H1 (cell line): ENCODE measurements at regions of chr5 and their contacts with region 1.

Region 1: DNA sequence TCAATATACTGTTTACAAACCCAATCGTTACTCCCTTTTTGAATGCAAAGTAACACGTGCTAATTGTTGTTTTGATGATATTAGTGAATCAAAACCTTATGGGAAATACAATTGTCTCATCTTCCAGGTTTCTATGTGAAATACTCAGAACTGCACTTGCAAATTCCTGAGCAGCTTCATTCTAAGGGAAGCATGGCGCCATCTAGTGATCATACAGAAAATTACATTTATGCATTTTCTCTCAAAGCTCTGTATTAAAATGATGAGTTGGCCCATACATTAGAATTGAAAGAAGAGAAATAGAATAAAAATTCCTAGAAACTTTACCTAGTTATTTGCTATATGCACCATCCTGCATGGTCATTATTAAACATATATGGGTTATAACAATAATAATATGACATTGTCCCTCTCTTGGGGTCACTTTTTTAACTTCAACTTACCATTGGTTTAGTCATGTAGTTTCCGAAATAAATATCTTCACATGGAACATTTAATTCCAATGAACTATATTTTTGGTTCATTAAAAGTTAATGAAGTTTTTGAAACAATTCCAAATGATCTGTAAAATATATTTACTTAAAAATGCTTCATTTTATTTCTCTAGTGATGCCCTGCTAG is 220.0 kb downstream of the PDE4D start:
- DNase-seq: no peak
- H3K4me3 ChIP-seq: no peak overlapping the region
- H3K27ac ChIP-seq: no peak overlapping the region
- H3K4me1 ChIP-seq: no peaks in the 10 kb centered on the region
- H3K27me3 ChIP-seq: no peaks in the 10 kb centered on the region
- CTCF ChIP-seq: peak in 2 of 3 experiments; percentile 60 to 65; a peak in 3 of 4 replicates
- EP300 ChIP-seq: no peak
- POLR2A ChIP-seq: no peak
- RAD21 ChIP-seq: peak; percentile 81 to 87

Region 2: DNA sequence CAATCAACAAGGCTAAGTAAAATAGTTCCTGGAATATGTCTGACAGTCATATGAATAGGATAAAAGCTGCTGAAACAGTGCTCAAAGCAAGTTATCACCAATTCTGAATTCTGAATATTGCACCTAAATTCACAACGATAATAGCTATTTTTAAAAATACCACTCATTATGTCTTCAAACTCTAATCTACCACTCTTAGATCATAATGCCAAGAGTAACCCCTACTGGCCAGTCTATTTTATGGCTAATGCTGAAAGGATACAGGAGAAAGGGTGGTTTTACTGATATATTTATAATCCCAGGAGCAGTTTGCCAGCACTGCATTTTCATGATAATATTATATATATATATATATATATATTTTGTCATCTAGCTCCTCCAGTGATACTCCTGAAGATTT is 12.8 kb before region 1 on chr5:
- CTCF ChIA-PET with region 1: interaction called, 51 read pairs
- POLR2A ChIA-PET with region 1: no interaction called
- DNase-seq: no peak
- H3K4me3 ChIP-seq: no peak overlapping the region
- H3K27ac ChIP-seq: no peak overlapping the region
- H3K4me1 ChIP-seq: peaks cover 0 to 3% (median 1%) of the 10 kb centered on the region in 4 experiments; a peak in 2 of 7 replicates
- H3K27me3 ChIP-seq: no peaks in the 10 kb centered on the region
- CTCF ChIP-seq: peak in 2 of 3 experiments; percentile 18 to 37; a peak in 2 of 4 replicates
- EP300 ChIP-seq: no peak
- POLR2A ChIP-seq: no peak
- RAD21 ChIP-seq: peak; percentile 59 to 67

Region 3: GRCh38 chr5:59684388-59685190 is 11.0 kb after region 1 on chr5:
- CTCF ChIA-PET with region 1: interaction called, 12 read pairs
- POLR2A ChIA-PET with region 1: no interaction called
- DNase-seq: no peak
- H3K4me3 ChIP-seq: no peak overlapping the region
- H3K27ac ChIP-seq: no peak overlapping the region
- H3K4me1 ChIP-seq: peaks cover 0 to 3% (median 0%) of the 10 kb centered on the region in 4 experiments; a peak in 1 of 7 replicates
- H3K27me3 ChIP-seq: no peaks in the 10 kb centered on the region
- CTCF ChIP-seq: no peak
- EP300 ChIP-seq: no peak
- POLR2A ChIP-seq: no peak
- RAD21 ChIP-seq: no peak

Region 4: GRCh38 chr5:59709846-59710245 is 36.3 kb after region 1 on chr5:
- CTCF ChIA-PET with region 1: interaction called, 10 read pairs
- POLR2A ChIA-PET with region 1: no interaction called
- DNase-seq: no peak
- H3K4me3 ChIP-seq: peak overlapping the region in 1 of 4 experiments; percentile 38; a peak in 2 of 8 replicates
- H3K27ac ChIP-seq: no peak overlapping the region
- H3K4me1 ChIP-seq: peaks cover 0 to 21% (median 7%) of the 10 kb centered on the region in 4 experiments; a peak in 3 of 7 replicates
- H3K27me3 ChIP-seq: no peaks in the 10 kb centered on the region
- CTCF ChIP-seq: no peak
- EP300 ChIP-seq: no peak
- POLR2A ChIP-seq: no peak
- RAD21 ChIP-seq: no peak

Region 5: DNA sequence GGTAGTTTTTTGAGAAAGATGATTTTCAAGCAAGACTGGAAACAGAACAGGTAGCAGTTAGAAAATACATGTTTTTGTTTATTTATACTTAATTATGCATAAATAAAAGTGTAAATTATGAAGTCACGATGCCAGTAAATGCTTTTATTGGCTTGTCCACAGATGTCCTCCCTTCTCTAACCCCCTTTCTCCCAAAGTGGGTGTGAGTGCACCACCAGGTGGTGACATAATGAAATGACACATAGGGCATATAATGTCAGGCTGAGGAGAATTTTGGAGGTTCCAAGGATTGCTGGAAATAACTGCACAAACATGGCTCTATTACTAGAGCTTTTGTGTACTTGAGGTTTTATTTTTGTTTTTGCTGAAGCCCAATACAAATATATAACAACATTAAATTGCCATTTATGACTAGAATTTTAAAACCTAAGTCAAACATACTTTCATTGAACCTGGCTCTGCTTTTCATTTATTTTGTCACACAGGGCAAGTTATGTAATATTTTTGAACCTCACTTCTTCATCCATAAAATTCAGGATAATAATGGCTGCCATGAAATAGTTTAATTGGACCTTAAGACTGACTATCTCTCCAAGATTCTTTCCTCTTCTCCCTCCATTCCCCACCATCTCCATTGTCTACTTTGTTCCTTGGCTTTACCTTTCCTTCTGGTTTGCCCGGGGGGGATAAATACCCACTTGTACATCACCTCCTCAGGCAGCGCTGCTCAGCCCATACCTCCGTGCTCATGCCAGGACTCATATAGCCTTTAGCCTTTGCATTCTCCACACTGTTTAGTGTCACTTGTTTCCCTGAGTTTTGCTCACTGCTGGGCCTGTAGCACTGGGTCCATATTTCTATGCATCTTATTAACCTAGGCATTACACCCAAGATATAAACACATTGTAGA is 51.2 kb after region 1 on chr5:
- CTCF ChIA-PET with region 1: interaction called, 11 read pairs
- POLR2A ChIA-PET with region 1: no interaction called
- DNase-seq: peak in 1 of 2 experiments; percentile 63
- H3K4me3 ChIP-seq: no peak overlapping the region
- H3K27ac ChIP-seq: no peak overlapping the region
- H3K4me1 ChIP-seq: no peaks in the 10 kb centered on the region; a peak in 2 of 7 replicates
- H3K27me3 ChIP-seq: no peaks in the 10 kb centered on the region
- CTCF ChIP-seq: peak; percentile 46 to 82 (median 79)
- EP300 ChIP-seq: no peak
- POLR2A ChIP-seq: no peak
- RAD21 ChIP-seq: peak; percentile 91 to 94